Activated CD4-positive, alpha-beta T cell treated with anti-CD3 and anti-CD28 coated beads, Interleukin-2, amount 10 ng/mL, durations not matched to agents 24 days and 14 days (primary cell): ENCODE measurements at regions of chr19 and their contacts with region 1.

Region 1: DNA sequence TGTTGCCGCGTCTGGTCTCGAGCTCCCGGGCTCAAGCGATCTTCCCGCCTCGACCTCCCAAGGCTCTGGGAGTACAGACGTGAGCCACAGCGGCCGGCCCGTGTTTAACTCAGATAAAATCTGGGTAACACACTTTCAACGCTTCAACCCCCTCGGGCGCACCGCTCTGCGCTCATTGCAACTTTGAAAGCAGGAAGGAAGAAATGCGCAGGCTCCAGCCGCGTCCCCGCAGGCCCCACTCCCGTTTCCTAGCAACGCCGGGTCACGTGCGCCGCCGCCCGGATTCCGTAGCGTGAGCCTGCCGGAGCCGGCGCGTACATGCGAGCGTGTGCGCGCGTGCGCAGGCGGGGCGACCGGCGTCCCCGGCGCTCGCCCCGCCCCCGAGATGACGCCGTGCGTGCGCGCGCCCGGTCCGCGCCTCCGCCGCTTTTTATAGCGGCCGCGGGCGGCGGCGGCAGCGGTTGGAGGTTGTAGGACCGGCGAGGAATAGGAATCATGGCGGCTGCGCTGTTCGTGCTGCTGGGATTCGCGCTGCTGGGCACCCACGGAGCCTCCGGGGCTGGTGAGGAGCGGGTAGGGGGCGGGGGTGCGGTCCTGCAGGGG is at the start of gene BSG:
- DNase-seq: peak; percentile 100
- H3K4me3 Mint-ChIP-seq: peak within 1 kb of the TSS; percentile 90
- H3K27ac Mint-ChIP-seq: peak within 1 kb of the TSS; percentile 95
- H3K4me1 Mint-ChIP-seq: peaks cover 30% of the 10 kb centered on the region
- H3K27me3 Mint-ChIP-seq: no peaks in the 10 kb centered on the region
- total RNA-seq, gene BSG: 291 and 297 TPM in 2 replicates

Region 2: DNA sequence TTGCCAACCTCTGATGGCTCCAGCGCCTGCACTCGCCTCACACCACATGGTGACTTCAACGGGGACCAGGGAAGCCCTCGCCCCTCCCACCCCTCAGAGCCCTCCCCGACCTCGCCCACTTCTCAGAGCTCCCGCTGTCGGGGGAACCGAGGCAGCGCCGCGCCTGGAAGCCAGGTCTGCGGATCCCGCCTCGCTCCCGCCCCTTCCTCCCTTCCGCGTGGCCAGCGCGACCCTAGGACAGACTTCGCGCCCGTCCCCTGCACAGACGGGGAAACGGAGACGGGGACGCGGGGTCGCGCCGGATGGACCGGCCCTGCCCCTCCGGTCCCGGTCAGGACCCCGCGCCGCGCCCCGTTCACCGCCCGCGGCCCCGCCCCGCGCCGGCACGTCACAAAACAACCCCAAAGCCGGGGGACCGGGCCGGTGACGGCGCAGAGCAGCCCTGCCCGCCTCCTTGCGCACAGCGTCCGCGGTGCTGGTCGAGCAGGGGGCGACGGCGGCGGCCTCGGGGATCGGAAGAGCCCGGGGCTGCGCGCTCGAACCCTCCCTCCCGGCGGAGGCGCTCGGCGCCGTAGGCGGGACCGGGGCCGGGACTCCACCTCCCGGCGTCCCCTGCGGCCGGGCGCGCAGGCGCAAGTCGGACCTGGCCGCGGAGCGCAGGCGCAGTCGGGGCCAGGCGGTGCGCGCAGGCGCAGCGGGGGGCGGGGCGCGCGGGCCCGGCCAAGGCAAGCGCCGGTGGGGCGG is 41.1 kb before region 1 on chr19:
- intact Hi-C with region 1: loop called (anchors 2 kb)
- DNase-seq: peak; percentile 98
- H3K4me3 Mint-ChIP-seq: peak overlapping the region; percentile 83
- H3K27ac Mint-ChIP-seq: peak overlapping the region; percentile 90
- H3K4me1 Mint-ChIP-seq: peaks cover 13% of the 10 kb centered on the region
- H3K27me3 Mint-ChIP-seq: peaks cover 4% of the 10 kb centered on the region

Region 3: GRCh38 chr19:610801-611505 is 38.7 kb after region 1 on chr19:
- intact Hi-C with region 1: loop called (anchors 1 kb)
- DNase-seq: peak; percentile 89
- H3K4me3 Mint-ChIP-seq: peak overlapping the region; percentile 86
- H3K27ac Mint-ChIP-seq: peak overlapping the region; percentile 95
- H3K4me1 Mint-ChIP-seq: peaks cover 12% of the 10 kb centered on the region
- H3K27me3 Mint-ChIP-seq: peaks cover 2% of the 10 kb centered on the region

Region 4: GRCh38 chr19:662962-663681 is 90.9 kb after region 1 on chr19 and contains the start of gene RNF126:
- intact Hi-C with region 1: loop called (anchors 1 kb)
- DNase-seq: peak; percentile 96
- H3K4me3 Mint-ChIP-seq: peak within 1 kb of the TSS; percentile 94
- H3K27ac Mint-ChIP-seq: peak within 1 kb of the TSS; percentile 93
- H3K4me1 Mint-ChIP-seq: peaks cover 20% of the 10 kb centered on the region
- H3K27me3 Mint-ChIP-seq: peaks cover 2% of the 10 kb centered on the region
- total RNA-seq, gene RNF126: 109 and 110 TPM in 2 replicates

Region 5: DNA sequence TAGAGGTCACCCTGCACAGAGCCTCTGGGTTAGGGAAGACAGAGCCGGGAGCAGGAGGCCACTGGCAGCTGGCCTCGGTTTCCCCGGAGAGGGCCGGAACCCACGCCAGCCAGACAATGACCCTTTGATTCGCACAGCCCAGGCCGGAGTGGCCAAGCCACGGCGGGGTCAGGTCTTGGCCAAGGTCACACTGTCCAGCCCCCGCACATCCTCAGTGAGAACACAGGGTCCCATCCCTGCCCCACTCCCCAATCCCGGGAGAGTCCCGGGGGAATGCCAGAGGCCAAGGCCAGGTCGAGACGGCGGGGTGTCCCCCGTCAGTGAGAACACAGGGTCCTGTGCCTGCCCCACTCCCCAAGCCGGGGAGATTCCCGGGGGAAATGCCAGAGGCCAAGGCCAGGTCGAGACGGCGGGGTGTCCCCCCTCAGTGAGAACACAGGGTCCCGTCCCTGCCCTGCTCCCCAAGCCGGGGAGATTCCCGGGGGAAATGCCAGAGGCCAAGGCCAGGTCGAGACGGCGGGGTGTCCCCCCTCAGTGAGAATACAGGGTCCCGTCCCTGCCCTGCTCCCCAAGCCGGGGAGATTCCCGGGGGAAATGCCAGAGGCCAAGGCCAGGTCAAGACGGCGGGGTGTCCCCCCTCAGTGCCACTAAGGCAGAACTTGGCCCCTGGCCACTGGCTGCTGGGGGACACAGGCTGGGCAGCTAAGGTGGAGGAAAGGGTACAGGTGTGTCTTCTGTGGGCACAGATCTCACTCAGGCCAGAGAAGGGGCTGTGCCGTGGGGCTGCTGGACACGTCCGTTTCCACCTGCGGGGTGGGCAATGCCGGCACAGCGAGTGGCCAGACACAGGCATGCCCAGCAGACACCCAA is 102.3 kb after region 1 on chr19:
- intact Hi-C with region 1: no loop called
- DNase-seq: no peak
- H3K4me3 Mint-ChIP-seq: no peak overlapping the region
- H3K27ac Mint-ChIP-seq: no peak overlapping the region
- H3K4me1 Mint-ChIP-seq: peaks cover 2% of the 10 kb centered on the region
- H3K27me3 Mint-ChIP-seq: peaks cover 13% of the 10 kb centered on the region